ENCODE measurements at regions of chr9 and their contacts with region 1.

Region 1: DNA sequence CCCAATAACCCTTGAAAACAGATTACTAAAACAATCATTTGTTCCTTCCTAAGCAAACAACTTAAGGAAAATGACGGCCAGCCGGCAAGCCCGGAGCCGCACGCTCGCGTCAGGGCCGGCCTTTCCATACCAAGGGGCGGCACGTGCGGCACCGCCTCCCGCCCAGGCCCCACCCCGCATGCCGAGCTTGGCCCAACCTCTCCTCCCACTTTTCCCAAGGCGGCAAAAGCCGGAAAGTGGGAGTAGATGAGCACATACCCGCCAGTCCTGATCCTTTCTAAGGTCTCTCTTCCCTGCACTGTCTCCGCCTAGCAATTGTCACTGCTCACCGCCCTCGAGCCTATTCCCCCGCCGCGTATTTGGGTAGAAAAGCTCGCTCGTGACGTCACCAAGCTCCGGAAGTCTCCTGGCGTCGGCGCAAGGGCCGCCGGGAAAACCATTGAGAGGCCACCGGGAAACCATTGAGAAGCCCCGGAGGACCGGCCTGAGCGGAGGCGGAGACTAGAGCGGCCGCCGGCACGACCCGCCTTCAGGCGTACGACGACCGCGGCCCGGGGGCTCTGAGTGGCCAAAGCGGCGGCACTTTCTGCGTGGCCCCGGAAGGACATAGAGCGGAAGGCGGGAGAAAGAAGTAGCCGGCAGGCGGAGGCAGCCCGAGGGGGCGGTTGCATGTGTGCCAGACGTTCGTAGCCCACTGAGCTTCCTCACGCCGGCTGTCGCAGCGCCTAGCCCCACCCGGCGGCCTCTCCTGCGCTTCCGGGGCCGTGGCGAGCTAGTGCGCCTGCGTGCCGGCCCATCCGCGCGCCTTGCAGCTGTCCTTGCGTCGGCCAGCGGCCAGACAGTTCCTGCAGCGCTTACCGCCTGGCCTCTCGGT is at the starts of genes NCBP1 and TSTD2:
- DNase-seq: peak; percentile 89 to 98 (median 95)
- ATAC-seq: peak; percentile 86
- H3K4me3 ChIP-seq: peak within 1 kb of the TSS; percentile 96 to 97
- H3K4me3 Mint-ChIP-seq: peak within 1 kb of the TSS; percentile 96
- H3K27ac ChIP-seq: peak within 1 kb of the TSS; percentile 88 to 97
- H3K27ac Mint-ChIP-seq: peak within 1 kb of the TSS; percentile 99
- H3K4me1 ChIP-seq: peaks cover 45% of the 10 kb centered on the region
- H3K4me1 Mint-ChIP-seq: peaks cover 57% of the 10 kb centered on the region
- H3K27me3 ChIP-seq: no peaks in the 10 kb centered on the region
- H3K27me3 Mint-ChIP-seq: no peaks in the 10 kb centered on the region
- CTCF ChIP-seq: no peak
- total RNA-seq, gene NCBP1: 50.7 to 58.5 TPM
- total RNA-seq, gene TSTD2: 34.3 to 40.8 TPM

Region 2: DNA sequence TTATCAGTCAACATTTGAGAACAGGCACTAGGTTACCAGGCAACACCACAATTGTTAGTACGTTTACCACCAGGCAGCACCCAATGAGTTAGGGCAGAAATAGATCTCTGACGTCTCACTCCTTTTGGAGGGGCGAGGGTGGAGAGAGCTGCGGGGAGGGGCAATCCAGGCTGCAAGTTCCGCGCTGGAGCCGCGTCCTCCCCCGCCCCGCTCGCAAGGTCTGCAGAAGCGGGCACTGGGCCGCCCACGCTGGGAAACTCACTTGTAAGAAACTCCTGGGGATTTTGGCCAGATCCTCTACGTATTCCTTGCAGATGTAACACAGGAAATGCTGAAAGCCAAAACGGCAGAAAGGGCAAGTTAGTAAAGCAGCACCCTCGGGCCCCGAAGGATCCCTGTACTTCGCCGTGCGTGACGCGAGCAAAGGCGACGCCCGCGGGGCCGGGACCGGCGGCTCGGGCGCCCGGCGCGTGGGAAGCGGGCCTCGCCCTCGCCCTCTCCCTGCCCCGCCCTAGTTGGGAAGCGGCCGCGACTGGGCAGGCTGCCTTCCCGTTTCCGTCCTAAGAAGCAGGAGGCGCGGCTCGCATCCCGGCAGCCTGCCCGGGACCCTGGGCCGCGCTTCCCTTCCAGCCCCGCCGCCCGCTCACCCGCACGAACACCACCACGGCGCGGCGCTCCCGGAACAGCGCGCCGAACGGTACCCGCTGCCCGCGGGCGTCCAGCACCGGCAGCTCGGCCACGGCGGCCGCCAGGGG is 978.6 kb before region 1 on chr9:
- CTCF ChIA-PET with region 1: no interaction called
- POLR2A ChIA-PET with region 1: no interaction called
- intact Hi-C with region 1: loop called in 1 of 2 experiments (anchors 5 kb)
- DNase-seq: peak; percentile 52 to 96 (median 77)
- ATAC-seq: peak; percentile 88
- H3K4me3 ChIP-seq: peak overlapping the region; percentile 57 to 71
- H3K4me3 Mint-ChIP-seq: peak overlapping the region; percentile 97
- H3K27ac ChIP-seq: peak overlapping the region; percentile 62 to 66
- H3K27ac Mint-ChIP-seq: peak overlapping the region; percentile 98
- H3K4me1 ChIP-seq: peaks cover 7% of the 10 kb centered on the region
- H3K4me1 Mint-ChIP-seq: peaks cover 22% of the 10 kb centered on the region
- H3K27me3 ChIP-seq: no peaks in the 10 kb centered on the region
- H3K27me3 Mint-ChIP-seq: no peaks in the 10 kb centered on the region
- CTCF ChIP-seq: no peak

Region 3: DNA sequence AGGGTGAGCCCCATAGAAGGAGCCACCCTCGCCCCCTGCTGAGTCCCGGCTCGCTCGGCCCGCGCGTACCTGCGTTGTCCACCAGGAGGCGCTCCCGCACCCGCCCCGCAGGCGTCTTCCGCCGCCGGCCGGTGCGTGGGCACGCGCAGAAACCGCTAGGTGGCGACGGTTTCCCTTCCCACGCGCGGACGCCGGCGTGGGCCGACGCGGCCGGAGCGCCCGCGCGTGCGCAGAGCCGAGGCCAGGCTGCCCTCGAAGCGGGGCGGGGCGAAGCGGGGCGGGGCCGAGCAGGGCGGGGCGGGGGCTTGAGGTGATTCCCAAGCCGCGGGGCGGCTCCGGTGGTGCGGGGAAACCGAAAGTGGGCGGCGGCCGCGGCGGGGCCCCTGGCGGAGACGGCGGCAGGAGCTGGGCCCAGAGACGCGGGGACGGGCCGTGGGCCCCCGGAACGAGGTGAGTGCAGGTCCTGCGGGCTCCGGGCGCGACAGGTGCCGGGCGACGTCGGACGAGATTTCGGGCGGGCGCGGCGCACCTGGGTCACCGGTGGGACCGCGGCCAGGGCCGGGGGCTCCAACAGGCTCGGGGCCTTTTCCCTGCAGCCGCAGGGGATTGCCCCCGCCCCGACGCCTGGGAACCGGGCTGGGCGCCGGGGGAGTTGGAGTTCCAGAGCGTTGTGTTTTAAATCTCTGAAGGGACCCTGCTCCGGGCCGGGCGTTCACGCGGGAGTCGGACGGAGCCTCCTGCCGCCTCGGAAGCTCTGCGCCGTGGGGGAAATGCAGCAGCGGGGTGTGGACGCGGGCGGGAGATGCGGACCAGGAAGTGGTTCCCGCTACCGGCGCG is 221.2 kb before region 1 on chr9 and contains the start of gene TDRD7:
- CTCF ChIA-PET with region 1: interaction called, 4 read pairs
- POLR2A ChIA-PET with region 1: no interaction called
- intact Hi-C with region 1: loop called (anchors 1 to 5 kb)
- DNase-seq: peak; percentile 86 to 97 (median 92)
- ATAC-seq: peak; percentile 88
- H3K4me3 ChIP-seq: peak within 1 kb of the TSS; percentile 62 to 77
- H3K4me3 Mint-ChIP-seq: peak within 1 kb of the TSS; percentile 86
- H3K27ac ChIP-seq: peak within 1 kb of the TSS; percentile 56 to 79
- H3K27ac Mint-ChIP-seq: peak within 1 kb of the TSS; percentile 85
- H3K4me1 ChIP-seq: peaks cover 13% of the 10 kb centered on the region
- H3K4me1 Mint-ChIP-seq: peaks cover 27% of the 10 kb centered on the region
- H3K27me3 ChIP-seq: no peaks in the 10 kb centered on the region
- H3K27me3 Mint-ChIP-seq: peaks cover 14% of the 10 kb centered on the region
- CTCF ChIP-seq: peak; percentile 96
- total RNA-seq, gene TDRD7: 3.5 to 4.5 TPM

Region 4: GRCh38 chr9:97696803-97697601 is 63.8 kb after region 1 on chr9 and contains the start of gene XPA:
- CTCF ChIA-PET with region 1: no interaction called
- POLR2A ChIA-PET with region 1: interaction called, 26 read pairs
- intact Hi-C with region 1: loop called (anchors 1 kb)
- DNase-seq: peak; percentile 90 to 99 (median 97)
- ATAC-seq: peak; percentile 94
- H3K4me3 ChIP-seq: peak within 1 kb of the TSS; percentile 68 to 79
- H3K4me3 Mint-ChIP-seq: peak within 1 kb of the TSS; percentile 83
- H3K27ac ChIP-seq: peak within 1 kb of the TSS; percentile 60 to 79
- H3K27ac Mint-ChIP-seq: peak within 1 kb of the TSS; percentile 92
- H3K4me1 ChIP-seq: peaks cover 39% of the 10 kb centered on the region
- H3K4me1 Mint-ChIP-seq: peaks cover 53% of the 10 kb centered on the region
- H3K27me3 ChIP-seq: no peaks in the 10 kb centered on the region
- H3K27me3 Mint-ChIP-seq: peaks cover 4% of the 10 kb centered on the region
- CTCF ChIP-seq: no peak
- total RNA-seq, gene XPA: 21.1 to 24.9 TPM

Region 5: DNA sequence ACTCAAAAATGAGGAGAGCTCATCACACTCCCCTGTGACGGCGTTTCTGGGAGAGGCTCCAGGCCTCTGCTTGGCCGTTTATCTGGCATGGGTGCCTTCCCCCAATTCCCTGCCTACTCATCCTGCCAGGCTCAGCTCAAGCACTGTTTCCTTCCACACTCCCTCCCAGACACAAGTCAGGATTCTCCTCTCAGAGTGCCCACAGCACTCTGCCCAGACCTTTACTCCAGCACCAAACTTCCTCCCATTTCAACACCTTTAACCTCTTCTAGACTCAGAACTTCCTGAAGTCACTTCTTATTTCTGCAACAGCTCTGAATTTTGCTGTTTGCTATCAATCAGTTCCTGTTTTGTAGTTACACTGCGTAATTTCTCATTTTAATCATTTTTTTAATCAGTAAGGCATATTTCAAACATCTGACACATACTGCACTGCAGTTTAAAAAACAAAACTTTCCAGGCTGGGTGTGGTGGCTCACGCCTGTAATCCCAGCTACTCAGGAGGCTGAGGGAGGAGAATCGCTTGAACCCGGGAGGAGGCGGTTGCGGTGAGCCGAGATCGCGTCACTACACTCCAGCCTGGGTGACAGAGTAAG is 273.1 kb after region 1 on chr9:
- CTCF ChIA-PET with region 1: no interaction called
- POLR2A ChIA-PET with region 1: interaction called, 4 read pairs
- intact Hi-C with region 1: loop called in 1 of 2 experiments (anchors 5 kb)
- DNase-seq: peak in 4 of 9 experiments; percentile 56 to 78 (median 68)
- ATAC-seq: peak; percentile 26
- H3K4me3 ChIP-seq: peak overlapping the region; percentile 4 to 34
- H3K4me3 Mint-ChIP-seq: peak overlapping the region; percentile 80
- H3K27ac ChIP-seq: peak overlapping the region; percentile 54 to 79
- H3K27ac Mint-ChIP-seq: peak overlapping the region; percentile 97
- H3K4me1 ChIP-seq: peaks cover 92% of the 10 kb centered on the region
- H3K4me1 Mint-ChIP-seq: peaks cover 88% of the 10 kb centered on the region
- H3K27me3 ChIP-seq: no peaks in the 10 kb centered on the region
- H3K27me3 Mint-ChIP-seq: no peaks in the 10 kb centered on the region
- CTCF ChIP-seq: no peak